Naive thymus-derived CD4-positive, alpha-beta T cell (primary cell): ENCODE measurements at regions of chr12 and their contacts with region 1.

Region 1: GRCh38 chr12:6778574-6779550 is 6.5 kb downstream of the LAG3 start:
- DNase-seq: peak; percentile 73 to 88 (median 84)
- ATAC-seq: peak; percentile 95
- H3K4me3 ChIP-seq: peak overlapping the region; percentile 69
- H3K4me3 Mint-ChIP-seq: peak overlapping the region; percentile 85 to 94 (median 87)
- H3K27ac ChIP-seq: peak overlapping the region; percentile 27
- H3K27ac Mint-ChIP-seq: peak overlapping the region; percentile 75 to 96 (median 86)
- H3K4me1 ChIP-seq: peaks cover 18 to 56% of the 10 kb centered on the region in 2 donors
- H3K4me1 Mint-ChIP-seq: peaks cover 36 to 77% (median 60%) of the 10 kb centered on the region in 7 donors
- H3K27me3 ChIP-seq: no peaks in the 10 kb centered on the region
- H3K27me3 Mint-ChIP-seq: peaks cover 0 to 15% (median 5%) of the 10 kb centered on the region in 5 donors

Region 2: DNA sequence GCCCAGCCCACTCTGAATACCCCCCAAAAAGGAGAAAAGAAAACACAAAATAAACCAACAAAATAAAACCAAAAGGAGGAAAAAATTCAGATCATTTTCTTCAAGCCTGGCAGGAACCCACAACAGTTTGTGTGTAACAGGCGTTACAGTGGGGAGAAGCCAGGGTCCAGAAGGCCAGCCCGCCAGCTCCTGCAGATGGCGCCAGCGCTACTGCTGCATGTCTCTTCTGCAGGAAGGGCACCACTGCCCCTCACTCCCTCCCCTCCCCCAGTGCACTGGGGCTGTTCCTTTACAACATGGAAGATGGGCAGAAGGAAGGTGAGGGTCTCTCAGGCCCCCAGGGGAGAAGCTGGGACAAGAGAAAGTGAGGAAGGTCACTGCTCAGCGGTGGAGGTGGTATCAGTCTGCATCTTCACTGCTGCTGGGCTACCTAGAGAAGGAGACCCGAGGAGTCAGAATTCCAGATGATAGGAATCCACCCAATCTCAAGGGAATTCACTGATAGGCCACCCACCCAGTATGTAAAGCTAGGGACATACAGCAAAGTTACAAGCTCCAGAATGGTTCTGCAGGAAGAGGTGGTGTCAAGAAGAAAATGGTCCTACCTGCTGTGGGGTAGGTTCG is 208.5 kb before region 1 on chr12:
- CTCF ChIA-PET with region 1: interaction called, 3 read pairs
- POLR2A ChIA-PET with region 1: no interaction called
- intact Hi-C with region 1: loop called in 1 of 2 experiments (anchors 5 kb)
- DNase-seq: peak in 1 of 9 donors; percentile 51
- ATAC-seq: no peak
- H3K4me3 ChIP-seq: no peak overlapping the region
- H3K4me3 Mint-ChIP-seq: peak overlapping the region in 7 of 10 donors; percentile 36 to 100 (median 94)
- H3K27ac ChIP-seq: no peak overlapping the region
- H3K27ac Mint-ChIP-seq: peak overlapping the region; percentile 47 to 99 (median 86)
- H3K4me1 ChIP-seq: peaks cover 8 to 18% of the 10 kb centered on the region in 2 donors
- H3K4me1 Mint-ChIP-seq: peaks cover 17 to 49% (median 44%) of the 10 kb centered on the region in 7 donors
- H3K27me3 ChIP-seq: no peaks in the 10 kb centered on the region
- H3K27me3 Mint-ChIP-seq: no peaks in the 10 kb centered on the region

Region 3: DNA sequence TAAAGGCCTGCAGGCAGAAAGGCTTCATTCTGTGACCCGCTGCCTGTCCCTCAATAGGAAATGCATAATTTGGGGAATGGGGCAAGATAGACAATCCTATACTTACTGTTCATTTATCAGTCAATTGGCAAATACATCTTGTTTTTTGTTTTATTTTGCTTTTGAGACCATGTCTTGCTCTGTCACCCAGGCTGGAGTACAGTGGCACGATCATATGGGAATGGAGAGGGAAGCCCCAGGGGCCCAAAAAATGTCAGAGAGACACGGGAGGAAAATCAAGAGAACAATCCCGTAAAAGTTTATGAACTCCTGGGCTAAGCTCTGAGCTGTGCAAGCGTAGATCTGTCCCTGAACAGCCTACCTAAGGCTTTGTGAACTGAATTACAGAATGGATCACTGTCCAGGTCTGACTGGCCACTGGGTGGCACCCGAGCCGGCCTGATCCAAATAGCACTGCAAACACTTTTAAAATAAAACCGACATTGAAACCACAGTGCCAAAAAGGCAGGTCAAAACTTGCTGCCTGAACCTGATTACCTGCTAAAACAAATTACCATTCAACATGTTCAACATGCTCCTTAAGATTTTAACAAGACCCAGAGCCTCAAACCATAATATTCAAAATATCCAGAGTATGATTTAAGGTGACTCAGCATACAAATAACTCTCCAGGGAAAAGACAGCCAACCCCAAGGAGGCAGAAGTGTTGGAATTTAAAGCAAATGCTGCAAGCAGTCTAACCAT is 43.2 kb before region 1 on chr12:
- CTCF ChIA-PET with region 1: interaction called, 3 read pairs
- POLR2A ChIA-PET with region 1: no interaction called
- intact Hi-C with region 1: loop called in 1 of 2 experiments (anchors 1 kb)
- DNase-seq: peak in 4 of 9 donors; percentile 23 to 39 (median 29)
- ATAC-seq: peak; percentile 81
- H3K4me3 ChIP-seq: no peak overlapping the region
- H3K4me3 Mint-ChIP-seq: no peak overlapping the region
- H3K27ac ChIP-seq: no peak overlapping the region
- H3K27ac Mint-ChIP-seq: peak overlapping the region in 1 of 9 donors; percentile 43
- H3K4me1 ChIP-seq: no peaks in the 10 kb centered on the region
- H3K4me1 Mint-ChIP-seq: peaks cover 0 to 10% (median 5%) of the 10 kb centered on the region in 7 donors
- H3K27me3 ChIP-seq: no peaks in the 10 kb centered on the region
- H3K27me3 Mint-ChIP-seq: no peaks in the 10 kb centered on the region

Region 4: GRCh38 chr12:6792522-6793201 is 13.8 kb after region 1 on chr12:
- CTCF ChIA-PET with region 1: interaction called, 15 read pairs
- POLR2A ChIA-PET with region 1: interaction called, 29 read pairs
- intact Hi-C with region 1: loop called (anchors 1 kb)
- DNase-seq: peak in 7 of 9 donors; percentile 66 to 79 (median 76)
- ATAC-seq: peak; percentile 76
- H3K4me3 ChIP-seq: peak overlapping the region; percentile 87
- H3K4me3 Mint-ChIP-seq: peak overlapping the region; percentile 85 to 99 (median 96)
- H3K27ac ChIP-seq: peak overlapping the region; percentile 86
- H3K27ac Mint-ChIP-seq: peak overlapping the region; percentile 88 to 99 (median 97)
- H3K4me1 ChIP-seq: peaks cover 0 to 29% of the 10 kb centered on the region in 2 donors
- H3K4me1 Mint-ChIP-seq: peaks cover 52 to 84% (median 72%) of the 10 kb centered on the region in 7 donors
- H3K27me3 ChIP-seq: no peaks in the 10 kb centered on the region
- H3K27me3 Mint-ChIP-seq: no peaks in the 10 kb centered on the region